ENCODE measurements at regions of chr1 and their contacts with region 1.

Region 1: GRCh38 chr1:47437447-47438164 is at the start of gene FOXD2:
- DNase-seq: peak; percentile 97
- ATAC-seq: peak; percentile 92
- H3K4me3 Mint-ChIP-seq: peak within 1 kb of the TSS; percentile 88
- H3K27ac Mint-ChIP-seq: peak within 1 kb of the TSS; percentile 70
- H3K4me1 Mint-ChIP-seq: peaks cover 31% of the 10 kb centered on the region
- H3K27me3 Mint-ChIP-seq: peaks cover 25% of the 10 kb centered on the region
- CTCF ChIP-seq: peak; percentile 77
- total RNA-seq, gene FOXD2: 0.10 and 0.20 TPM in 2 replicates

Region 2: GRCh38 chr1:47231301-47232186 is 206.1 kb before region 1 on chr1:
- CTCF ChIA-PET with region 1: no interaction called
- POLR2A ChIA-PET with region 1: no interaction called
- intact Hi-C with region 1: loop called (anchors 2 kb)
- DNase-seq: peak; percentile 29
- ATAC-seq: no peak
- H3K4me3 Mint-ChIP-seq: peak overlapping the region; percentile 79
- H3K27ac Mint-ChIP-seq: peak overlapping the region; percentile 24
- H3K4me1 Mint-ChIP-seq: peaks cover 33% of the 10 kb centered on the region
- H3K27me3 Mint-ChIP-seq: peaks cover 74% of the 10 kb centered on the region
- CTCF ChIP-seq: no peak

Region 3: DNA sequence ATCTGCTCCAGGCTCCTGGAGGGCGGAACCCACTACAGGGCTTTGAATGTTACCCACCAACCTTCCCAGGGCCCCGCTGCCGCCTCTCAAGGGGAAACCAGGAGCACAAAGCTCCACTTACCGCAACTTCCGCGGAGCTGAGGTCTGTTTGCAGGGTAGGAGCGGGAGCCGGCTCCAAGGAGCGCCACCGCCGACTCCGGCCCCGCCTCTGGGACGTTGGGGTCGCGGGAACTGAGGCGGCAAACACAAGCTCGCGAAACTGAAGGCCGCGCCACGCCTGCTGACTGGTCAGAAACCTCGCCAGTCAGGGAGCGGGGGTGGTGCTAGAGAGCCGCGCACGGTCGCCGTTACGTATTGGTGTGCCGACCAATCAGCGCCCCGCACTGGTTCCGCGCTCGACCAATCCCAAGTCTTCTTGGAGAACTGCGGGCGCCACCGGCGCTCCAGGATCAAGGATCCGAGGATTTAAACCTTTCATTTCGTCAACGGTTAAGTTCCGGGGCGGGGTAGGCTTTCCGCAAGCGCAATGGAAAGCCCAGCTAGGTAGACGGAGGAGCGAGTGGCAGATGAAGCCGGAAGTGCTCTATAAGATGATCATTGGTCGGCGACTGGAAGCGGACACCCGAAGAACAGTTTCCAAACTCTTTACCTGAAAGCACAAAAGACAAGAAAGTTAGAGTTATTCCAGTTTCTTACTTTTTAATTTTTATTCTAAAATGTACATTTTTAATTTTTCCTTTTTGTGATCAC is 123.5 kb before region 1 on chr1 and contains the start of gene STIL:
- CTCF ChIA-PET with region 1: interaction called, 3 read pairs
- POLR2A ChIA-PET with region 1: interaction called, 7 read pairs
- intact Hi-C with region 1: loop called (anchors 1 kb)
- DNase-seq: peak; percentile 89
- ATAC-seq: peak; percentile 98
- H3K4me3 Mint-ChIP-seq: peak within 1 kb of the TSS; percentile 94
- H3K27ac Mint-ChIP-seq: peak within 1 kb of the TSS; percentile 95
- H3K4me1 Mint-ChIP-seq: peaks cover 12% of the 10 kb centered on the region
- H3K27me3 Mint-ChIP-seq: no peaks in the 10 kb centered on the region
- CTCF ChIP-seq: no peak
- total RNA-seq, gene STIL: 2.6 and 4.2 TPM in 2 replicates

Region 4: GRCh38 chr1:47333922-47334764 is 103.5 kb before region 1 on chr1:
- CTCF ChIA-PET with region 1: interaction called, 9 read pairs
- POLR2A ChIA-PET with region 1: interaction called, 7 read pairs
- intact Hi-C with region 1: loop called (anchors 1 kb)
- DNase-seq: peak; percentile 78
- ATAC-seq: peak; percentile 86
- H3K4me3 Mint-ChIP-seq: no peak overlapping the region
- H3K27ac Mint-ChIP-seq: peak overlapping the region; percentile 92
- H3K4me1 Mint-ChIP-seq: peaks cover 19% of the 10 kb centered on the region
- H3K27me3 Mint-ChIP-seq: no peaks in the 10 kb centered on the region
- CTCF ChIP-seq: no peak

Region 5: DNA sequence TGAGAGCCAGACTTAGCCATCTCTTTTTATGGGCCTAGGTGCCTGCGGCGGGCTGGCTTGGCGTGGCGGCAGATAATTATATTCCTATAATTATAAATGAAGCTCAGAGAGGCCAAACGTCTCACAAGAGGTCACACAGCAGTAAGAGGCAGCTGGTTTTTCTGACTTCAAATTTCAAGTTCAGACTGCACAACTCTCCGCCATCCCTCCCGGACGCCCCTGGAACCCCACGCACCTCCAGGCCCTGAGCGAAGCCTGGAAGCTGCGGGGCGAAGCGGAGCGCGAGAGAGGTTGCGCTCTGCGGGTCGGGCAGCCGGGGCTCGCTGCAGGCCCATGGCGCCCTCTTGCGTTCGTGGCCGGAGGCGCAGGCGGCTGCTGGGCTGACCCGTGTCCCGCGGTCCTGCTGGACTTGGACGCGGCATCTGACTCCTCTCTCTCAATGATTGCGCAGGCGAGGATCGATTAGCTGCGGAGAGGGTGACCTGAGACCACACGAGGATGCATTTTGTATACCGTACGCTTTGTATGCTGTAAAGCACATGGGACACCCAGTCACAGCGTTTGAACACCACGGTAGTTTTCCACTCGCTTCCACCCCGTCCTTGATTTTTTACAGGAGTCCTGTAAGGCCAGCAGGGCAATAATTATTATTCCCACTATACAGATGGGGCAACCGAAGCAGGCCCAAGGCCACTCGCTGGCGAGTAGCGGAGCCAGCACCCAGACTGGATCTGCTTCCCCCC is 272.9 kb after region 1 on chr1:
- CTCF ChIA-PET with region 1: interaction called, 16 read pairs
- POLR2A ChIA-PET with region 1: no interaction called
- intact Hi-C with region 1: loop called (anchors 2 kb)
- DNase-seq: peak; percentile 56
- ATAC-seq: peak; percentile 52
- H3K4me3 Mint-ChIP-seq: no peak overlapping the region
- H3K27ac Mint-ChIP-seq: no peak overlapping the region
- H3K4me1 Mint-ChIP-seq: peaks cover 15% of the 10 kb centered on the region
- H3K27me3 Mint-ChIP-seq: peaks cover 62% of the 10 kb centered on the region
- CTCF ChIP-seq: peak; percentile 57

Region 6: GRCh38 chr1:47725992-47726855 is 288.6 kb after region 1 on chr1:
- CTCF ChIA-PET with region 1: interaction called, 10 read pairs
- POLR2A ChIA-PET with region 1: interaction called, 6 read pairs
- intact Hi-C with region 1: loop called (anchors 1 kb)
- DNase-seq: no peak
- ATAC-seq: peak; percentile 85
- H3K4me3 Mint-ChIP-seq: peak overlapping the region; percentile 69
- H3K27ac Mint-ChIP-seq: no peak overlapping the region
- H3K4me1 Mint-ChIP-seq: peaks cover 11% of the 10 kb centered on the region
- H3K27me3 Mint-ChIP-seq: peaks cover 47% of the 10 kb centered on the region
- CTCF ChIP-seq: no peak